Activated CD4-positive, alpha-beta T cell treated with anti-CD3 and anti-CD28 coated beads, Interleukin-2, amount 10 ng/mL, durations not matched to agents 24 days and 14 days (primary cell): ENCODE measurements at regions of chr18 and their contacts with region 1.

Region 1: GRCh38 chr18:2655178-2655953 is at the start of gene SMCHD1:
- DNase-seq: peak; percentile 96
- H3K4me3 Mint-ChIP-seq: peak within 1 kb of the TSS; percentile 94
- H3K27ac Mint-ChIP-seq: peak within 1 kb of the TSS; percentile 100
- H3K4me1 Mint-ChIP-seq: peaks cover 30% of the 10 kb centered on the region
- H3K27me3 Mint-ChIP-seq: no peaks in the 10 kb centered on the region
- total RNA-seq, gene SMCHD1: 98.4 and 109 TPM in 2 replicates

Region 2: DNA sequence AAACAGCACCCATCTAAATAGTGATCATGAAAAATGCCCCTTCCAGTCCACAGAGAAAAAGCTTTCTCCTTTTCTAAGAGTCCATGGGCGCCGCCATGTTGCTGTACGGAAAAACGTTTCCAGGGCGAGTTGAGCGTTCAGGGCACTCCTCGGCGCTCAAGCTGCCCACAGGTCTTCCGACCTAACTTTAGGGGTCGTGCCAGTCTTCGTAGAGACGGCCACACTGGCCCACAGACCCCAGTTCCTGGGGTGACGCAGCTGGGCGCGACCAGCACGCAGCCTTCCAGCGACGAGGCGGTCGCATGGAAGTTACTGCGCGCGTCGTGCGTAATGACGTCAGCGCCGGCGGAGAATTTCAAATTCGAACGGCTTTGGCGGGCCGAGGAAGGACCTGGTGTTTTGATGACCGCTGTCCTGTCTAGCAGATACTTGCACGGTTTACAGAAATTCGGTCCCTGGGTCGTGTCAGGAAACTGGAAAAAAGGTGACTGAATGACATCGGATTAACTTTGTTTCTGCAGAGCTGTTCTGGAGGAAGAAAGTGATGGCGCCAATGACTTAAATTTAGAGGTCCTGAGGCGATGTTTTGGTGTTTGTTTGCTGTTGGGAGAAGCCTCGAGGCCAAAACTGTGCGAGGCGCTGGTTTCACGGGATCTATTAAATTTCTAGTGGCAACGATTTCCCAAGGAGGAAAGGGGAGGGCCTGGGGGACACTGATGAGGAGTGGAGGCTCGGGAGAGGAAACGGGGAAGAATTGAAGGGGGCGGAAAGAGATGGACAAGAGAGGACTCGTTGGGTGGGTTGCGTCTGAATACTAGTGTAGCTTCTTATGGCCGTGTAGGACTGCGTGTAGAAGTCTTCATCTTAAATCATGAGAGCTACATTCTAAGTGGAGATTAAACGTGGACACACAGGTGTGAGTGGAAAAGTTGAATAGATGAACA is 83.9 kb before region 1 on chr18 and contains the starts of genes METTL4 and NDC80:
- intact Hi-C with region 1: loop called (anchors 1 kb)
- DNase-seq: peak; percentile 96
- H3K4me3 Mint-ChIP-seq: peak within 1 kb of the TSS; percentile 97
- H3K27ac Mint-ChIP-seq: peak within 1 kb of the TSS; percentile 98
- H3K4me1 Mint-ChIP-seq: peaks cover 50% of the 10 kb centered on the region
- H3K27me3 Mint-ChIP-seq: no peaks in the 10 kb centered on the region
- total RNA-seq, gene METTL4: 17.7 and 18.4 TPM in 2 replicates
- total RNA-seq, gene NDC80: 42.4 and 50.5 TPM in 2 replicates

Region 3: GRCh38 chr18:2606335-2606734 is 49.0 kb before region 1 on chr18:
- intact Hi-C with region 1: loop called (anchors 1 kb)
- DNase-seq: no peak
- H3K4me3 Mint-ChIP-seq: peak overlapping the region; percentile 70
- H3K27ac Mint-ChIP-seq: peak overlapping the region; percentile 88
- H3K4me1 Mint-ChIP-seq: peaks cover 44% of the 10 kb centered on the region
- H3K27me3 Mint-ChIP-seq: no peaks in the 10 kb centered on the region

Region 4: DNA sequence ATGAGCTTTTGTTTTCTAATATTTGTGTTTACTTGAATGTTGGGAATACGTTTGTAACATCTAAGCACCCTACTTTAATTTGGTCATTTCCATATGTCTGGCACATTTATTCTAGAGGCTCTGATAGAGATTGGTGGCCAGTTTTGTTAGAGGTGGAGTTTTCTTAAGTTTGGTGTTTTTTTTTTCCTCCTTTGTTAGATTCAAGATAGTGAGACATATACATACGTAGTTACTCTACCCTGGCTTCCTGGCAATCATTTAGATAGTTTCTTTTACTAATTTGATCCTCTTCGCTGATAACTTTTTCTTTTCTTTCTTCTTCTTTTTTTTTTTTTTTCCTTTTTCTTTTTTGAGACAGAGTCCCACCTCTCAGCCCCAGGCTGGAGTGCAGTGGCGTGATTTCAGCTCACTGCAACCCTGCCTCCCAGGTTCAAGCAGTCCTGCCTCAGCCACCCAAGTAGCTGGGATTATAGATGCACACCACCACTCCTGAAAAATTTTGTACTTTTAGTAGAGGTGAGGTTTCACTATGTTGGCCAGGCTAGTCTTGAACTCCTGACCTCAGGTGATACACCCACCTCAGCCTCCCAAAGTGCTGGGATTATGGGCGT is 26.7 kb after region 1 on chr18:
- intact Hi-C with region 1: loop called (anchors 2 kb)
- DNase-seq: no peak
- H3K4me3 Mint-ChIP-seq: peak overlapping the region; percentile 56
- H3K27ac Mint-ChIP-seq: peak overlapping the region; percentile 85
- H3K4me1 Mint-ChIP-seq: peaks cover 50% of the 10 kb centered on the region
- H3K27me3 Mint-ChIP-seq: no peaks in the 10 kb centered on the region

Region 5: DNA sequence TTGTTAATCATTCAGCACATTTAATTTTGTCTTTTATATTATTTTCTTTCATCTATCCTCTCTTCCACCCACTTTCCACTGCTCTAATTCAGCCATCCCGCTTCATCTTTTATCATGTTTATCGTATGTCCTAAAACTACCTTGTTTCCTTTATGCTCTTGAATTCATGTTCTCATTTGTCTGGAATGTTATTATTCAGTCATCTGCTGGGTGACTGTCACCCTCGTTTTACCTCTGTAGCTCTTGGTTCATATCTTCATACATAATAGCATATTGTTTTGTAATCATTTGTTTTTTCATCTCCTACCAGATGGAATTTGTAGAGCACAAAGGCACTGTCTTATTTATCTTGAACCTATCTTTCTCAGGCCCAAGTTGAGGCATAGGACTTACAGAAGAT is 37.1 kb after region 1 on chr18:
- intact Hi-C with region 1: no loop called
- DNase-seq: no peak
- H3K4me3 Mint-ChIP-seq: no peak overlapping the region
- H3K27ac Mint-ChIP-seq: peak overlapping the region; percentile 30
- H3K4me1 Mint-ChIP-seq: peaks cover 20% of the 10 kb centered on the region
- H3K27me3 Mint-ChIP-seq: no peaks in the 10 kb centered on the region

Region 6: DNA sequence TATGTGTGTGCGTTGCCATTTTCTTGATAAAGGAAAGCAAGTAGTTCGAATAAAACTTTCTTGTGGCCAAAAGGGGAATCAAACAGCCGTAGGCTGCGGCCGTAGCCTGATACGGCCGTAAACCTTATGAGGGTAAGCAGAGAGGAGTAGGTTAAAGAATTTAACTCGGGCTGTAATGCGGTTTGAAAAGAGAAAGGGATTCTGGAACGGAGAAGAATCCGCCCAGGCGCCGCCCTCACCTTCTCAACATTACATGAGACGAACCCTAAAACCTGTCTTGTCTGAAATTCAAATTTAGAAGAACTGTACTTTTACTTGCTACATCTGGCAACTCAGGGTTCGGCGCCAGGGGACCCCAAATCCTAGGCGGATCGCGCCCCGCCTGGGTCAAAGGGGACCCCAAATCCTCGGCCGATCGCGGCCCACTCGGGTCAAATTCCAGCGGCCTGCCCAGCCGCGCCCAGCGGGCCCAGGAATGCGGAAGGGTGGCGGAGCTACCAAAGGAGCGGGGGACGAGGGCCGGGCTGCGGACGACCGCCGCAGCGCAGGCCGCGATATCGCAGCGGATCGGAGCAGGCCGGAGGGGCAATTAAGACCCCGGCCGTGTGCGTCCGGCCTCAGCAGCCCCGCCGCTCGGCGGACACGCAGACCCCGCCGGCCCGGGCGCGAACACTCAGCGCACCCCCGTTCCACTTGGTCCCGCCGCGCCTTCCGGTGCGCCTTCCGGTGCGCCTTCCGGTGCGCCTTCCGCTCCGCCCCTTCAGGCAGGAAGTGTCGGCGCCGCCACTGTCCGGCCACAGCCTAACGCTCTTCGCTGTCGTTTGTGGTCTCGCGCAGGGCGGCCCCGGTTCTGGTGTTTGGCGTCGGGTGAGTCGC is 606.2 kb after region 1 on chr18 and contains the start of gene MYL12B:
- intact Hi-C with region 1: loop called (anchors 5 kb)
- DNase-seq: peak; percentile 94
- H3K4me3 Mint-ChIP-seq: peak within 1 kb of the TSS; percentile 89
- H3K27ac Mint-ChIP-seq: peak within 1 kb of the TSS; percentile 98
- H3K4me1 Mint-ChIP-seq: peaks cover 68% of the 10 kb centered on the region
- H3K27me3 Mint-ChIP-seq: no peaks in the 10 kb centered on the region
- total RNA-seq, gene MYL12B: 239 and 245 TPM in 2 replicates